CD4-positive, alpha-beta T cell (primary cell): ENCODE measurements at regions of chr2 and their contacts with region 1.

Region 1: DNA sequence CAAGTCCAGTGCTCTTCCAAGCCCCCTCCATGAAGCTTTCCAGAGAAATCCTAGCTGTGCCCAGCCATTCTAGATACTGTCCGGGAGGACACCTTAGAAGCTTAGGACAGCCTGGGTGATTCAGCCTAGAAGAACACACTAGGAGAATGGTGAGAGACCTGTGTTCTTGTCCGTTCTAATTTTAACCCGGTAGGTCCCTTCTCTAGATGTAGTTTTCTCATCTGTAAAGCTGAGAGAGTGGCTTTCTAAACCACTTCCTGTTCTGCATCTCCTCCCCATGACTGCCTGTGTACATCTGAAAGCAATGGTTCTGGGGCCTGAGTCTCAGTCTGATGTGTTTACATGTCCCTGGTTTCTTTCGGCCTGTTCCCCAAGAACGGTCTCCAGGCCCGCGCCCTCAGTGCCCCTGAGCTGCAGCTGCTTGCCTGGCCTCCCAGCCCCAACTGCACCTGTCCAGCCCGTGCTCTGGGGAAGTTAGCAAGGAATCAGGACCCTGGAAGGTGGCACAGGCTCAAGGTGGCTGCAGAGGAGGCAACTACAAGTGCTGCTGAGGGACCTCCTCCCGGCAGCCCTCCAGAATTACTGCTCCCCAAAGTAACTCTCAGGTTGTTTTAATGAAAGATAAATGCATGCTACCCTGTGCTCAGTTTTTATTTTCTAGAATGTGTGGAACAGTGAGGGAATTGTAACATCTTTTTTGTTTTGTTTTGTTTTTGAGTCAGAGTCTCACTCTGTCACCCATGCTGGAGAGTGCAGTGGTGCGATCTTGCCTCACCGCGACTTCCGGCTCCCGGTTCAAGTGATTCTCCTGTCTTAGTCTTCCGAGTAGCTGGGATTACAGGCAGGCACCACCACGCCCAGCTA is 105.9 kb downstream of the LBH start:
- DNase-seq: peak in 13 of 14 experiments; percentile 21 to 84 (median 52)
- ATAC-seq: peak; percentile 77
- H3K4me3 ChIP-seq: peak overlapping the region; percentile 20
- H3K4me3 Mint-ChIP-seq: peak overlapping the region; percentile 80
- H3K27ac ChIP-seq: peak overlapping the region; percentile 54 to 68
- H3K27ac Mint-ChIP-seq: peak overlapping the region; percentile 98
- H3K4me1 ChIP-seq: peaks cover 76% of the 10 kb centered on the region
- H3K4me1 Mint-ChIP-seq: peaks cover 87% of the 10 kb centered on the region
- H3K27me3 ChIP-seq: no peaks in the 10 kb centered on the region
- H3K27me3 Mint-ChIP-seq: no peaks in the 10 kb centered on the region
- CTCF ChIP-seq: no peak

Region 2: DNA sequence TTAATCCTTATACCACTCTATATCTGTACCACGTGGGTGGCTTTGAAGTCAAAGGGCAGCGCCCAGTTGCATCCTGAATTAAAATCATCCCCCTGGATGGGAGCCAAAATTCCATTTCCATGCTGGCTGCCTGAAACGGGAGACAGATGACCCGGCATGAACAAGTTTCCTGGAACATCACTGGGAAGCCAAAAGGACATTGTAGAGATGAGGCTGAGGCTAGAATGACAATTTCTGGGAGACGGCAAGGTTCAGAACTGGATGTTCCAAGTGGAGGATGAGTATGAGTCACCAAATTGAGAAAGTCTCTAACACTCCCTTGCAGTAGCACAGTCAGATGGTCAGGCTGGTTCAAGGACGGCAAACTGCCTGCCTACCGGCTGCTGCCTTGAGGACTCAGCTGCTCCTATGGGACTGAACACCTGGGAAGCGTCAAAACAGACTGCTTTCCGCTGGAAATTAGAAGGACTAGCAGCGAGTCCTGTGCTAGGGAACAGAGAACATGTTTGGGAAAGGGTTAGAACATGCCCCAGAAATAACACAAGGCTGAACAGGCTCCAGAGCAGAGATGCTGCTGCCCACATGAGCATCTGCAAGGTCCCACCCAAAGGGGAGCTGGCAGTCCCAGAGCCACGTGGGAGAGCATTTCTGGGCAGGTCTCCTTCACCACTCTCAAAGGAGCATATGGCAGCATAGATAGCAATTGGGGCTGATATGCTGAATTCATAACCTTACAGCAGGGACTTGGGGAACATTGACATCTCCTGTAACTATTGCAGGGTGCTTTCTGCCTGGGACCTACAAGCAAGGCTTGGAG is 158.4 kb before region 1 on chr2:
- CTCF ChIA-PET with region 1: no interaction called
- POLR2A ChIA-PET with region 1: no interaction called
- intact Hi-C with region 1: no loop called
- DNase-seq: no peak
- ATAC-seq: no peak
- H3K4me3 ChIP-seq: no peak overlapping the region
- H3K4me3 Mint-ChIP-seq: no peak overlapping the region
- H3K27ac ChIP-seq: no peak overlapping the region
- H3K27ac Mint-ChIP-seq: no peak overlapping the region
- H3K4me1 ChIP-seq: no peaks in the 10 kb centered on the region
- H3K4me1 Mint-ChIP-seq: no peaks in the 10 kb centered on the region
- H3K27me3 ChIP-seq: no peaks in the 10 kb centered on the region
- H3K27me3 Mint-ChIP-seq: no peaks in the 10 kb centered on the region
- CTCF ChIP-seq: no peak

Region 3: DNA sequence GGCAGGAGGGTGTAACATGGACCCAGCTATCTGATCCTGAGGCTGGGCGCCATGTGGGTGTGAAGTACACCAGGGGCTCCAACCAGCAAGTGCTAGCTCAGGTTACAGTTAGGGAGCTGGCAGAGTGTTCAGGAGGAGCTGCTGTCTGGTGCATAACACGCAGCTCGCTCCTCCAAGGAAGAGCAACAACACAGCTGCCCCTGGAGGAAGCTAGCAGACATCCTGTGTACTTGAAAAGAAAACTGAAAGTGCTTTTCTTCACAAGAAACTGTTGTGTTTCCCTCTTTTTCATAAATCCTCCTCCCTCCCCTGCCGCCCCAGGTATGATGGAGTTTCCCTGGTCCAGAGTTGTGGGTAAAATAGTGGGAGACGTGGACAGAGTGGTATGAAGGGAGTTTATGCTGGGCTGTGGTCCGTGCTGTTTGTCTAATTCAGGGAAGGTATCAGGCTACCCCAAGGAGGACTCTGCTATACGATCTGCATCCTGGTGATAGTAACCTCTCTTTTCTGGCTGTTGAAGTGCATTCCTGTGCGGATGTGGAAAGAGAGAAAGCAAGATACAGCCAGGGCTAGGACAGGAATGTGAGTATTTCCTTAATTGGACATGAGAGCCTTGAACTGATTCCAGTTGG is 112.0 kb before region 1 on chr2:
- CTCF ChIA-PET with region 1: no interaction called
- POLR2A ChIA-PET with region 1: interaction called, 73 read pairs
- intact Hi-C with region 1: loop called in 1 of 2 experiments (anchors 5 kb)
- DNase-seq: peak; percentile 28 to 85 (median 50)
- ATAC-seq: peak; percentile 84
- H3K4me3 ChIP-seq: peak overlapping the region; percentile 65
- H3K4me3 Mint-ChIP-seq: peak overlapping the region; percentile 97
- H3K27ac ChIP-seq: peak overlapping the region; percentile 92 to 94
- H3K27ac Mint-ChIP-seq: peak overlapping the region; percentile 99
- H3K4me1 ChIP-seq: peaks cover 71% of the 10 kb centered on the region
- H3K4me1 Mint-ChIP-seq: peaks cover 81% of the 10 kb centered on the region
- H3K27me3 ChIP-seq: no peaks in the 10 kb centered on the region
- H3K27me3 Mint-ChIP-seq: no peaks in the 10 kb centered on the region
- CTCF ChIP-seq: no peak

Region 4: GRCh38 chr2:30239308-30239985 is 97.8 kb before region 1 on chr2:
- CTCF ChIA-PET with region 1: interaction called, 12 read pairs
- POLR2A ChIA-PET with region 1: interaction called, 73 read pairs
- intact Hi-C with region 1: loop called in 1 of 2 experiments (anchors 5 kb)
- DNase-seq: peak; percentile 49 to 91 (median 71)
- ATAC-seq: peak; percentile 79
- H3K4me3 ChIP-seq: peak overlapping the region; percentile 12
- H3K4me3 Mint-ChIP-seq: peak overlapping the region; percentile 82
- H3K27ac ChIP-seq: peak overlapping the region in 1 of 2 donors; percentile 42
- H3K27ac Mint-ChIP-seq: peak overlapping the region; percentile 99
- H3K4me1 ChIP-seq: peaks cover 89% of the 10 kb centered on the region
- H3K4me1 Mint-ChIP-seq: peaks cover 96% of the 10 kb centered on the region
- H3K27me3 ChIP-seq: no peaks in the 10 kb centered on the region
- H3K27me3 Mint-ChIP-seq: no peaks in the 10 kb centered on the region
- CTCF ChIP-seq: peak; percentile 85

Region 5: DNA sequence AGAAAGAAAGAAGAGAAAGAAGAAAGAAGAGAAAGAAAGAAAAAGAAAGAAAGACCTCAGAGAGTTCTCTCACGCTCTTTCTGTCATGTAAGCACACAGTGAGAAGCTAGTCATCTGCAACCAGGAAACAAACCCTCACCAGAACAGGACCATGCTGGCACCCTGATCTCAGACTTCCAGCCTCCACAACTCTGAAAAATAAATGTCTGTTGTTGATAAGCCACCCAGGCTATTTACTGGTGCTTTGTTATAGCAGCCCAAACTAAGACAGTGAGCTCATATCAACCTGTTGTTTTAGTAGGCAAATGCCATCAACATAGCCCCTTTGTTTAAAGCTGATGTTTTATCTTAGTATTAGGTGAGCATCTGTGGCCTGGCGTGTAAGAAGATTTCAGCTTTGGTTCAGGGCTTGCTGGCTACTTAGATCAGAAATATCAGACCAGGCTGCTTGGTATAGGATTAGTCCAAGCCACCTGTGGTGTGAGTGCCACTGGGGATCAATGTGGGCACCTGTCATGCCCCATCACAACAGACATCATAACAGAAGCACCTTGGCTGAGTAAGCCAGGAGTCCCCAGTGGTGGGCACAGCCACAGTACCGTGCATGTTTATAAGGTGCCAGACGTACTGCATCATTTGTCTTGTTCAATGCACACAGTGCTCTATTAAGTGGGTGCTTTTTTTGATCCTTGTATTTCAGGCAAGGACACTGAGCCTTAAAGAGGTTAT is 11.4 kb before region 1 on chr2:
- CTCF ChIA-PET with region 1: no interaction called
- POLR2A ChIA-PET with region 1: interaction called, 13 read pairs
- intact Hi-C with region 1: no loop called
- DNase-seq: peak in 1 of 14 experiments; percentile 29
- ATAC-seq: peak; percentile 58
- H3K4me3 ChIP-seq: no peak overlapping the region
- H3K4me3 Mint-ChIP-seq: no peak overlapping the region
- H3K27ac ChIP-seq: no peak overlapping the region
- H3K27ac Mint-ChIP-seq: peak overlapping the region; percentile 56
- H3K4me1 ChIP-seq: no peaks in the 10 kb centered on the region
- H3K4me1 Mint-ChIP-seq: peaks cover 27% of the 10 kb centered on the region
- H3K27me3 ChIP-seq: no peaks in the 10 kb centered on the region
- H3K27me3 Mint-ChIP-seq: no peaks in the 10 kb centered on the region
- CTCF ChIP-seq: no peak

Region 6: GRCh38 chr2:30421604-30422443 is 84.6 kb after region 1 on chr2:
- CTCF ChIA-PET with region 1: no interaction called
- POLR2A ChIA-PET with region 1: interaction called, 26 read pairs
- intact Hi-C with region 1: loop called in 1 of 2 experiments (anchors 5 kb)
- DNase-seq: peak in 8 of 14 experiments; percentile 10 to 63 (median 19)
- ATAC-seq: peak; percentile 47
- H3K4me3 ChIP-seq: no peak overlapping the region
- H3K4me3 Mint-ChIP-seq: peak overlapping the region; percentile 43
- H3K27ac ChIP-seq: peak overlapping the region; percentile 48 to 51
- H3K27ac Mint-ChIP-seq: peak overlapping the region; percentile 82
- H3K4me1 ChIP-seq: peaks cover 30% of the 10 kb centered on the region
- H3K4me1 Mint-ChIP-seq: peaks cover 42% of the 10 kb centered on the region
- H3K27me3 ChIP-seq: no peaks in the 10 kb centered on the region
- H3K27me3 Mint-ChIP-seq: no peaks in the 10 kb centered on the region
- CTCF ChIP-seq: no peak